ENCODE measurements at regions of chr10 and their contacts with region 1.

Region 1: DNA sequence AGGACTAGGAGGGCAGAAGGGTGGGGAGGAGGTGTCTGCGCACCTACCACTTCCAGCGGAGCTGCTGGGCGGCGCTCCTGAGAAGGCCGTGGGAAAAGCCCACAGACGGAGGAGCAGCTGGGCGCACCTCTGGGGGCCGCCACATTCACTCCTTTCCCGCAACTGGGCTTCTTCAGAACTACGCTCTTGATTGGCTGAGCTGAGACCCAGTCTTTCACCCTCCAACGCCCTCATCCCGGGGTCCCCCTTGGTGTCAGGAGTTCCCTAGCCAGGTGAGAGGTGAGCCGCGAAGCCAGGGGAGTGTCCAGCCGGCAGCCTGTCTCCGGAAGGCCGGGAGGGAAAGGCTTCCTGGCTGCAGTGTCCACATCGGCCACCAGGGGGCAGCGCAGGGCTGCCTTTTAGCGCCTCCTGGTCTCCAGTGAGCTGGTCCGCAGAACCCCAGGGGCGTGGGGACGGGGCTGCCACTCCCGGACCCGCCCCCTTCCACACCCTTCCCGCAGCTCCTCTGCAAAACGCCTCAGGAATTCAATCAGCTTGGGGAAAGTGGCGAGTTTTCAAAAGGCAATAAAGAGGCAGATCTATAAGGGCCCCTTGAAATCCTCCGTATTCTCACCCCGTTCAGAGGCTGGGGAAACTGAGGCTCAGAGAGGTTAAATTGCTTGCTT is 98.8 kb downstream of the CHST15 start:
- H3K4me3 Mint-ChIP-seq: peak overlapping the region; percentile 56
- H3K27ac Mint-ChIP-seq: peak overlapping the region; percentile 71
- H3K4me1 Mint-ChIP-seq: peaks cover 65% of the 10 kb centered on the region
- H3K27me3 Mint-ChIP-seq: peaks cover 55% of the 10 kb centered on the region

Region 2: GRCh38 chr10:124025660-124026588 is 31.4 kb after region 1 on chr10:
- intact Hi-C with region 1: loop called (anchors 5 kb)
- H3K4me3 Mint-ChIP-seq: no peak overlapping the region
- H3K27ac Mint-ChIP-seq: peak overlapping the region; percentile 33
- H3K4me1 Mint-ChIP-seq: peaks cover 24% of the 10 kb centered on the region
- H3K27me3 Mint-ChIP-seq: peaks cover 33% of the 10 kb centered on the region

Region 3: DNA sequence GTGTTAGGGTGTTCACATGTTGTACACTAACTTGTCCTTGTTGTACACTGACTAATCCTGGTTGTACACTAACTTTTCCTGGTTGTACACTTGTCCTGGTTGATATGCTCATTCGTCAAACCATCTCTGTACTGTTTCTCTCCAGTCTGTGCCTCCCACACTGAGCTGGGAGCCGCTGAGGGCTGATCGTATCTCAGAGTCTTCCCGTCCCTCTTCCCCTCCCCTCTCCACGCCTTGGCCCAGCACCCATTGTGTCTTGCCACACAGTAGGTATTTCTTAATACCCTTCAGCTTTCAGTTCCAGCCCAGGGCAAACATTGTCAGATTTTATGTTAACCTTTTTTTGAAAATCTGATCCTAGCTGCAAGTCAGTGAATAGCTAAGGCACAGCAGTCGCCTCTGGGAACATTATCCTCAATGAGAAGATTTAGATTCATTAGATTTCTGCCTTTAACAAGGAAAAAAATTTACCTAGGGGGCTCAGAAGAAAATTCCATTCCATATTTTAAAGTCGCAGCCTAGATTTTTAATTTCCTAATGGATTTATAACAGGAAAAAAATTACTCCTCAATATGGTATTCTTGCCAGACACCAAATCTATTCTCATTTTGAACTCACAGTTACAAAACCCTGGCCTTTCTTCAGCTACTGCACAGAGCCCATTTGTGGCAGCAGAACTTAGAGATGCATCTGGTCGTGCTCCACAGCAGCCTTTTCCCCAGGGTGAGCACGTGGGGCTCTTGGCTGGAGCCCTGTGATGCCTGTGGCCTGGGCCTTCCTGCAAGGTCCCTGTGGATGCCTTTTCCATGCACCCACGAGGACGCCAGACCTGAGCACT is 131.8 kb after region 1 on chr10:
- intact Hi-C with region 1: no loop called
- H3K4me3 Mint-ChIP-seq: no peak overlapping the region
- H3K27ac Mint-ChIP-seq: no peak overlapping the region
- H3K4me1 Mint-ChIP-seq: peaks cover 30% of the 10 kb centered on the region
- H3K27me3 Mint-ChIP-seq: peaks cover 23% of the 10 kb centered on the region